PC-9 (cell line): ENCODE measurements at regions of chr2 and their contacts with region 1.

Region 1: GRCh38 chr2:237744613-237745249 is 53.8 kb upstream of the RBM44 start:
- DNase-seq: peak in 1 of 2 experiments; percentile 84
- H3K4me3 ChIP-seq: no peak overlapping the region
- H3K27ac ChIP-seq: no peak overlapping the region; the same call in 1 of the 2 replicates
- H3K4me1 ChIP-seq: peaks cover 35% of the 10 kb centered on the region
- H3K27me3 ChIP-seq: no peaks in the 10 kb centered on the region
- CTCF ChIP-seq: peak; percentile 94

Region 2: GRCh38 chr2:237122214-237122666 is 622.5 kb before region 1 on chr2:
- CTCF ChIA-PET with region 1: no interaction called
- POLR2A ChIA-PET with region 1: no interaction called
- intact Hi-C with region 1: loop called (anchors 10 kb)
- DNase-seq: peak; percentile 55 to 67
- H3K4me3 ChIP-seq: no peak overlapping the region
- H3K27ac ChIP-seq: peak overlapping the region; percentile 44
- H3K4me1 ChIP-seq: peaks cover 19% of the 10 kb centered on the region; the same call in 1 of the 2 replicates
- H3K27me3 ChIP-seq: no peaks in the 10 kb centered on the region
- CTCF ChIP-seq: peak; percentile 79

Region 3: GRCh38 chr2:237590272-237591140 is 154.2 kb before region 1 on chr2 and contains the start of gene RAB17:
- CTCF ChIA-PET with region 1: no interaction called
- POLR2A ChIA-PET with region 1: no interaction called
- intact Hi-C with region 1: loop called (anchors 2 kb)
- DNase-seq: peak; percentile 91 to 94
- H3K4me3 ChIP-seq: peak within 1 kb of the TSS; percentile 64
- H3K27ac ChIP-seq: peak within 1 kb of the TSS; percentile 85
- H3K4me1 ChIP-seq: peaks cover 28% of the 10 kb centered on the region
- H3K27me3 ChIP-seq: no peaks in the 10 kb centered on the region
- CTCF ChIP-seq: no peak
- total RNA-seq, gene RAB17: 86.3 and 88.1 TPM in 2 replicates

Region 4: GRCh38 chr2:237624565-237624964 is 120.2 kb before region 1 on chr2:
- CTCF ChIA-PET with region 1: no interaction called
- POLR2A ChIA-PET with region 1: no interaction called
- intact Hi-C with region 1: loop called (anchors 1 kb)
- DNase-seq: no peak
- H3K4me3 ChIP-seq: no peak overlapping the region
- H3K27ac ChIP-seq: no peak overlapping the region
- H3K4me1 ChIP-seq: no peaks in the 10 kb centered on the region
- H3K27me3 ChIP-seq: peaks cover 36% of the 10 kb centered on the region
- CTCF ChIP-seq: no peak

Region 5: DNA sequence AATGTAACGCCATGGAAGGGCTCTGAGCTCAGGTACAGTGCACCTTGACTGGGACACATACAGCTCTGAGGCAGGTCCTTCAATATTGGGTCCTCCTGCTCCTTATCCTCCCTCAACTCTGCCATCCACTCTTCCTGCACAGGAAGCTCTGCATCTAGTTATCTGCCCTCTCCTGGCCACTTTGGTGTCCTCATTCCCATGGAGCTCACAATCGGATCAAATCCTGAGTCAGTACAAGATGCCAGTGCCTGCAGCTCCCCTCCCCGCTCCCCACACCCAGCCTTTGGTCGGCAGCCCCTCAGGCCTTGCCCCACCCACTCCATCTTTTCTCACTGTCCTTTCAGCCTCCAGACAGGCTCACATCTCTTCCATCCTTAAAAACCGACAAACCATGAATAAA is 59.3 kb before region 1 on chr2:
- CTCF ChIA-PET with region 1: interaction called, 10 read pairs
- POLR2A ChIA-PET with region 1: no interaction called
- intact Hi-C with region 1: no loop called
- DNase-seq: no peak
- H3K4me3 ChIP-seq: no peak overlapping the region
- H3K27ac ChIP-seq: no peak overlapping the region
- H3K4me1 ChIP-seq: peaks cover 57% of the 10 kb centered on the region
- H3K27me3 ChIP-seq: no peaks in the 10 kb centered on the region
- CTCF ChIP-seq: peak; percentile 29; the same call in 1 of the 2 replicates

Region 6: DNA sequence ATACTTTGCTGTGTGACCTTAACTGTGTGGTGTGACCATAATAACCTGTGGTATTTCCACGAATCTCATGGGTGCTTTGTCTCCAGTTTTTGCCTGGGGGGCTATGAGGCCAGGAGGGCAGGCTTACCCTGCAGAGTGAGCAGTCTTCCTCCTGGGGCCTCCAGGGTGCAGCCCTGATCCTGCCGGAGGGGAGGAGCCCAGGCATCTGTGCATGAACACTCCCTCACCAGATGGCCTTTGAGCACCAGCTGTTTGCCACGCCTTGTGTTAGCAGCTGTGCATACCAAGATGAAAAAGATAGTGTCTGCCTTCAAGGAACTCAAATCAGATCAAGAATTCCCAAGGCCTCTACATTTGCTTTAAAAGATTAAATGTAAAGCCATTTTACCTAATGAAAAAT is 21.1 kb before region 1 on chr2:
- CTCF ChIA-PET with region 1: interaction called, 3 read pairs
- POLR2A ChIA-PET with region 1: no interaction called
- intact Hi-C with region 1: loop called (anchors 2 kb)
- DNase-seq: peak; percentile 67 to 70
- H3K4me3 ChIP-seq: no peak overlapping the region
- H3K27ac ChIP-seq: no peak overlapping the region
- H3K4me1 ChIP-seq: peaks cover 8% of the 10 kb centered on the region; the same call in 1 of the 2 replicates
- H3K27me3 ChIP-seq: no peaks in the 10 kb centered on the region
- CTCF ChIP-seq: no peak

Region 7: DNA sequence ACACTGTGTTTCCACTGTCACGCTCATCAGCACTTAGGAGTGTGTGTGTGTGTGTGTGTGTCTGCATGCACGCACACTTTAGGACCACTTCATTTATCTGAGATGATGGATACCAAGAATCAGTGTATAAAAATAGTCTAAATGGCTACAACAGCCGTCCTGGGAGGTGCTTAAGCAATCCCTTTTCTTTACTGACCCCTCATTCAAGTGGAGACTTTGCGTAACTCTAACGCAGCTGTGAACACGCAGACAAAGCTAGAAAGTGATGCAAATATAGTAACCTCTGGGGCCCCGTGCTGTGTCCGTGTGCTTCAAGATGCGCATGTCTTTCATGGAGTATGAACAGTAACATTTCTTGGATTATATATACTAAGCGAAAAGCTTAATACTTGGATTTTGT is 13.5 kb after region 1 on chr2:
- CTCF ChIA-PET with region 1: no interaction called
- POLR2A ChIA-PET with region 1: no interaction called
- intact Hi-C with region 1: no loop called
- DNase-seq: no peak
- H3K4me3 ChIP-seq: no peak overlapping the region
- H3K27ac ChIP-seq: no peak overlapping the region
- H3K4me1 ChIP-seq: no peaks in the 10 kb centered on the region; the same call in 1 of the 2 replicates
- H3K27me3 ChIP-seq: no peaks in the 10 kb centered on the region
- CTCF ChIP-seq: no peak